ENCODE measurements at regions of chr1 and their contacts with region 1.

Region 1: GRCh38 chr1:207868774-207869721 is 41.9 kb downstream of the CD34 start:
- DNase-seq: peak; percentile 89
- CTCF ChIP-seq: peak; percentile 99

Region 2: GRCh38 chr1:207831517-207832327 is 37.3 kb before region 1 on chr1:
- in situ Hi-C with region 1: loop called (anchors 5 kb)
- DNase-seq: peak; percentile 79
- CTCF ChIP-seq: no peak

Measured in GM13976 (cell line).